GM12878 (cell line): ENCODE measurements at regions of chr20 and their contacts with region 1.

Region 1: GRCh38 chr20:1734269-1734858 is 76.8 kb upstream of the SIRPG start:
- DNase-seq: no peak
- ATAC-seq: peak; percentile 91
- H3K4me3 ChIP-seq: no peak overlapping the region
- H3K27ac ChIP-seq: no peak overlapping the region; the same call in 1 of the 2 replicates
- H3K4me1 ChIP-seq: peaks cover 16% of the 10 kb centered on the region
- H3K27me3 ChIP-seq: no peaks in the 10 kb centered on the region
- CTCF ChIP-seq: peak; percentile 48 to 69 (median 60); a peak in 5 of 6 replicates
- EP300 ChIP-seq: no peak
- POLR2A ChIP-seq: no peak
- RAD21 ChIP-seq: peak; percentile 97

Region 2: GRCh38 chr20:1535420-1536175 is 198.8 kb before region 1 on chr20:
- CTCF ChIA-PET with region 1: interaction called, 19 read pairs
- POLR2A ChIA-PET with region 1: no interaction called
- RAD21 ChIA-PET with region 1: interaction called, 18 read pairs
- SMC1A ChIA-PET with region 1: interaction called, 37 read pairs
- in situ Hi-C with region 1: no loop called
- intact Hi-C with region 1: loop called (anchors 2 kb)
- DNase-seq: peak; percentile 96
- ATAC-seq: peak; percentile 87
- H3K4me3 ChIP-seq: no peak overlapping the region
- H3K27ac ChIP-seq: peak overlapping the region; percentile 40
- H3K4me1 ChIP-seq: peaks cover 38% of the 10 kb centered on the region
- H3K27me3 ChIP-seq: peaks cover 0 to 1% of the 10 kb centered on the region in 2 experiments; a peak in 1 of 4 replicates
- CTCF ChIP-seq: no peak
- EP300 ChIP-seq: peak in 1 of 2 experiments; percentile 86; a peak in 2 of 4 replicates
- POLR2A ChIP-seq: no peak
- RAD21 ChIP-seq: no peak

Region 3: DNA sequence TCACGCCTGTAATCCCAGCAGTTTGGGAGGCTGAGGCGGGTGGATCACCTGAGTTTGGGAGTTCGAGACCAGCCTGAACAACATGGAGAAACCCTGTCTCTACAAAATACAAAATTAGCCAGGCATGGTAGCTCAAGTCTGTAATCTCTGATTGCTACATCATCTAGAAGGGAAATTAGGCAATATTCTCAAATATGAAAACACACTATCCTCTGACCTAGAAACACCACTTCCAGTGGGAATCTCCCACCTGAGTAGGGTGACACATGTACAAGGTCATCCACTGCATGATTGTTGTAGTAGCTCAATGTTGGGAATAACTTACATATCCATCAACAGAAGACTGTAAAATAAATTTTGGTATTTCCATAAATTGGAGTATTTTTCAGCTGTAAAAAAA is 157.7 kb before region 1 on chr20:
- CTCF ChIA-PET with region 1: interaction called, 3 read pairs
- POLR2A ChIA-PET with region 1: no interaction called
- RAD21 ChIA-PET with region 1: interaction called, 4 read pairs
- SMC1A ChIA-PET with region 1: no interaction called
- in situ Hi-C with region 1: no loop called
- intact Hi-C with region 1: loop called (anchors 1 kb)
- DNase-seq: no peak
- ATAC-seq: no peak
- H3K4me3 ChIP-seq: no peak overlapping the region
- H3K27ac ChIP-seq: no peak overlapping the region
- H3K4me1 ChIP-seq: no peaks in the 10 kb centered on the region
- H3K27me3 ChIP-seq: no peaks in the 10 kb centered on the region
- CTCF ChIP-seq: no peak
- EP300 ChIP-seq: no peak
- POLR2A ChIP-seq: no peak
- RAD21 ChIP-seq: no peak

Region 4: DNA sequence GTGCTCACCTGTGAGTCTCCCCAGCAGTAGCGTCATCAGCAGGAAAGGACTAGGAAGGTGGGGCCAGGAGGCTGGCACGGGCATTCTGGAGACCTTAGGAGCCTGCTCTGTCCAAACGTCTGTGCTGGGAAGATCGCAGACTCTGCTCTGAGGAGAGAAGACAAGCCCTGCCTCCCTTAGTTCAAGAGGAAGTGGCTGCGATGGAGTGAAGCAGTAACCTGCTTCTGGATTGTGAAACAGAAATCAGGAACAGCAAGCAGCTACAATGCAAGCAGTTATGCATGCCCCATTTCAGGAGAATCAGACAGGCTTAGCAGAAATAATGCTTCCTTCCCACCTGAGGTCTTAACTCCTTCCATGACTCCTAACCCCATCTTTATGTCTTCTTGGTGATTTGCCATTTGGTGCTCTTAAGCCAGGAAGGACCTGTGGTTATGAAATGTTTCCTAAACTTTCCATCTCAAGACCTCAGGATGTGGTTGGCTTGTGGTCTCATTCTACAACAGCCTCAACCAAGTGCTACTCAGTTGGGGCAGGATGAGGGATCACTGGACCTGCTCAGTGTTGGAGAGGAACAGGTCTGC is 114.4 kb before region 1 on chr20 and contains the start of gene SIRPB1:
- CTCF ChIA-PET with region 1: interaction called, 6 read pairs
- POLR2A ChIA-PET with region 1: interaction called, 3 read pairs
- RAD21 ChIA-PET with region 1: interaction called, 5 read pairs
- SMC1A ChIA-PET with region 1: interaction called, 5 read pairs
- in situ Hi-C with region 1: no loop called
- intact Hi-C with region 1: loop called (anchors 5 kb)
- DNase-seq: no peak
- ATAC-seq: peak; percentile 61
- H3K4me3 ChIP-seq: peak within 1 kb of the TSS; percentile 20; the same call in 1 of the 2 replicates
- H3K27ac ChIP-seq: no peak within 1 kb of the TSS; the same call in 1 of the 2 replicates
- H3K4me1 ChIP-seq: peaks cover 28% of the 10 kb centered on the region
- H3K27me3 ChIP-seq: no peaks in the 10 kb centered on the region
- CTCF ChIP-seq: no peak
- EP300 ChIP-seq: no peak
- POLR2A ChIP-seq: no peak
- RAD21 ChIP-seq: no peak
- polyA plus RNA-seq, gene SIRPB1: 27.9 to 33.8 TPM

Region 5: GRCh38 chr20:1631309-1632151 is 102.8 kb before region 1 on chr20:
- CTCF ChIA-PET with region 1: interaction called, 6 read pairs
- POLR2A ChIA-PET with region 1: no interaction called
- RAD21 ChIA-PET with region 1: no interaction called
- SMC1A ChIA-PET with region 1: interaction called, 12 read pairs
- in situ Hi-C with region 1: no loop called
- intact Hi-C with region 1: no loop called
- DNase-seq: no peak
- ATAC-seq: peak; percentile 51
- H3K4me3 ChIP-seq: no peak overlapping the region
- H3K27ac ChIP-seq: no peak overlapping the region
- H3K4me1 ChIP-seq: peaks cover 9% of the 10 kb centered on the region
- H3K27me3 ChIP-seq: no peaks in the 10 kb centered on the region
- CTCF ChIP-seq: no peak
- EP300 ChIP-seq: no peak
- POLR2A ChIP-seq: no peak
- RAD21 ChIP-seq: no peak

Region 6: GRCh38 chr20:1664911-1665310 is 69.5 kb before region 1 on chr20:
- CTCF ChIA-PET with region 1: no interaction called
- POLR2A ChIA-PET with region 1: interaction called, 4 read pairs
- RAD21 ChIA-PET with region 1: interaction called, 13 read pairs
- SMC1A ChIA-PET with region 1: interaction called, 5 read pairs
- in situ Hi-C with region 1: no loop called
- intact Hi-C with region 1: no loop called
- DNase-seq: peak; percentile 19
- ATAC-seq: peak; percentile 65
- H3K4me3 ChIP-seq: no peak overlapping the region
- H3K27ac ChIP-seq: no peak overlapping the region
- H3K4me1 ChIP-seq: peaks cover 26% of the 10 kb centered on the region
- H3K27me3 ChIP-seq: no peaks in the 10 kb centered on the region
- CTCF ChIP-seq: no peak
- EP300 ChIP-seq: 0 out of 4 replicates have a peak, but pooled peaks of 1 of the 2 experiments have one; percentile 42
- POLR2A ChIP-seq: no peak
- RAD21 ChIP-seq: no peak; the same call in 1 of the 2 replicates

Region 7: DNA sequence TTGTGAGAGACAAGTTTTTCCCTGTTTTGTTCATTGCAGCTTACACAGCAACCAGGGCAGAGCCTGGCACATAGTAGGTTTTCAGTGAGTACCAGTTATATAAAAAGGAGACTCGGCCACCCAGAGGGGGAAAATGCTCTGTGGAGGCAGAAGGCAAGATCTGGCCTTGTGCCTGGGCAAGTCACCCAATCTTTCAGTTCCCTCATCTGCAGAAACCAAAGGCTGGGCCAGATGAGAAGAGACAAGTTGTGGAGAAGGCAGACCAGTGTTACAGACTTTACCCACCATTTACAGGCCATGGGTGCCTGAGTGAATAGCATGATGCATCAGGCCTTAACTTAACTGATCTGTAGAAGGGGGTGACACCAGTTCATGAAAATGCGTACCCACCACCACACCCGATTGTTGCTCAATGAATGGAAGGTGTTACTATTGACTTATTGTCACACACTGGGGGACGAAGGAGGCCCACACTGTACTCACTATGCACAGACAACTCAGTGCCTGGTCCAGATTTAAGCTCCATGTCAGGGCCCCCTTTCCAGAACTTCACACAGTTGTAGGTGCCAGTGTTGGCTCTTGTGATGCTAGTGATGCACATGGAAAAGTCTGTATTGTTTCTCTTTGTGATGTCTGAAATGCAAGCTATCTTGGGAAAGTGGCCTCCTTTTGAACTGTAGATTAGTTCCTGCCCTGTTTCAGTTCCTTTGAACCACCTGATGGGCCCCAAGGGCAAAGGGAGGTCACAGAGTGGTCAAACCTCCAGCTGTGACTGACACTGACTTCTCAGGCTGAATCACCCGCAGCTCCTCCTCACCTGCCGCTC is 12.5 kb before region 1 on chr20:
- CTCF ChIA-PET with region 1: interaction called, 13 read pairs
- POLR2A ChIA-PET with region 1: interaction called, 3 read pairs
- RAD21 ChIA-PET with region 1: interaction called, 6 read pairs
- SMC1A ChIA-PET with region 1: interaction called, 12 read pairs
- in situ Hi-C with region 1: no loop called
- intact Hi-C with region 1: no loop called
- DNase-seq: no peak
- ATAC-seq: peak; percentile 92
- H3K4me3 ChIP-seq: no peak overlapping the region
- H3K27ac ChIP-seq: peak overlapping the region; percentile 63
- H3K4me1 ChIP-seq: peaks cover 23% of the 10 kb centered on the region
- H3K27me3 ChIP-seq: no peaks in the 10 kb centered on the region
- CTCF ChIP-seq: no peak
- EP300 ChIP-seq: peak in 1 of 2 experiments; percentile 59; a peak in 1 of 4 replicates
- POLR2A ChIP-seq: no peak
- RAD21 ChIP-seq: peak; percentile 18; the same call in 1 of the 2 replicates